ENCODE measurements at regions of chr1 and their contacts with region 1.

Region 1: DNA sequence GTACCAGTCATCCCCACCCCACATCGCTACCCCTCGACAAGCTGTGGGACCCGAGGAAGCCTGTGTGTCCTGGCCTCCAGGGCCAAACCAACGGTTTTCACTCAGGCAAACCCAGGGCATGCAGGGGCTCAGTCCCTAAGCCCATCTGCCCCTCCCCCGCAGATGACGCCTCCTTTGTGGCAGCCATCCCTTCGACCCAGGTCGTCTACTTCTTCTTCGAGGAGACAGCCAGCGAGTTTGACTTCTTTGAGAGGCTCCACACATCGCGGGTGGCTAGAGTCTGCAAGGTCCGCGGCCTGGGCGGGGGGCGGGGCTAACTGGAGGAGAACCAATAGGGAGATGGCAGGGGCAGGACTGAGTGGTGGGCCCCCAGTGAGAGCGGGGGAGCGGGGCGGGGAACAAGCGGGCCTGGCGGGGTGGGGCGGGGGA is 7.4 kb downstream of the SEMA4A start:
- DNase-seq: peak; percentile 49
- H3K4me3 Mint-ChIP-seq: peak overlapping the region; percentile 77
- H3K27ac Mint-ChIP-seq: peak overlapping the region; percentile 93
- H3K4me1 Mint-ChIP-seq: peaks cover 72% of the 10 kb centered on the region
- H3K27me3 Mint-ChIP-seq: no peaks in the 10 kb centered on the region

Region 2: DNA sequence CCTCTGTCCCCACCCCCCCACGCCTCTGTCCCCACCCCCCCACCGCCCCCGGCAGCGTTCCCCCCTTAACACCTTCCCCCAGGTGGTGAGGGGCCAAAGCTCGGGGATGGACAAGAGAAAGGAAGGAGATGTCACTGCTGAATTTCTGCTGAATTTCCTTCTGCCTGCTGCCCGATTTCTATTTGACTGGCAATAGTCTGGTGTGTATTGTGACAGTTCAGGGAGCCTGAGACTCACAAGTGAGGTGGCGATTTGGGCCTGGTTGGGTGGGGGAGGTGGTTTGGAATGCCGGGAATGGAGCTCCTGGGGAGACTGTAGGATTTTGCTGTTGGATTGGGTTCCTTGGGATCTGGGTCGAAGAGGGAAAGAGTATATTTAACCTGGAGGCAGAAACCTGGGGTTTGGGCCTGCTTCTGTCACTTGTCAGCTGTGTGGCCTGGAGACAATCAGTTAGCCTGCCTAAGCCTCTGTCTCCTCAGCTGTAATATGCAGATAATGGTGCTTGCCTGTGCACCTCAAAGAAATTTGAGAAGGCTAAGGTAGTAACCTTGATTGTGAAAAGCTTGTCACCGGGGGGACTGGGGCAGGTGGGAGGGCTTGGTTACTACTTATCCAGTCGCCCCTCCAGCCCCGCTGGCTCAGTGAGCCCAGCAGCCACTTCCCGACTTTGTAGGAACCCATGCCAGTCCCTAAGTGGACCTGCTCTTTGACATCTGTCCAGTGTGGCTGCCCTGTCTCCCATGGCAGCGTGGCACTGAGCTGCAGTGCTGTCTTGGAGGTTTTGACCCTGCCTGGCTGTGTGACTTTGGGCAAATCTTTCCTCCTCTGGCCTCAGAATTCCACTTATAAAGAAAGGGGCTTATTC is 53.9 kb before region 1 on chr1:
- intact Hi-C with region 1: loop called (anchors 1 kb)
- DNase-seq: no peak
- H3K4me3 Mint-ChIP-seq: peak overlapping the region; percentile 87
- H3K27ac Mint-ChIP-seq: peak overlapping the region; percentile 100
- H3K4me1 Mint-ChIP-seq: peaks cover 54% of the 10 kb centered on the region
- H3K27me3 Mint-ChIP-seq: no peaks in the 10 kb centered on the region

Region 3: DNA sequence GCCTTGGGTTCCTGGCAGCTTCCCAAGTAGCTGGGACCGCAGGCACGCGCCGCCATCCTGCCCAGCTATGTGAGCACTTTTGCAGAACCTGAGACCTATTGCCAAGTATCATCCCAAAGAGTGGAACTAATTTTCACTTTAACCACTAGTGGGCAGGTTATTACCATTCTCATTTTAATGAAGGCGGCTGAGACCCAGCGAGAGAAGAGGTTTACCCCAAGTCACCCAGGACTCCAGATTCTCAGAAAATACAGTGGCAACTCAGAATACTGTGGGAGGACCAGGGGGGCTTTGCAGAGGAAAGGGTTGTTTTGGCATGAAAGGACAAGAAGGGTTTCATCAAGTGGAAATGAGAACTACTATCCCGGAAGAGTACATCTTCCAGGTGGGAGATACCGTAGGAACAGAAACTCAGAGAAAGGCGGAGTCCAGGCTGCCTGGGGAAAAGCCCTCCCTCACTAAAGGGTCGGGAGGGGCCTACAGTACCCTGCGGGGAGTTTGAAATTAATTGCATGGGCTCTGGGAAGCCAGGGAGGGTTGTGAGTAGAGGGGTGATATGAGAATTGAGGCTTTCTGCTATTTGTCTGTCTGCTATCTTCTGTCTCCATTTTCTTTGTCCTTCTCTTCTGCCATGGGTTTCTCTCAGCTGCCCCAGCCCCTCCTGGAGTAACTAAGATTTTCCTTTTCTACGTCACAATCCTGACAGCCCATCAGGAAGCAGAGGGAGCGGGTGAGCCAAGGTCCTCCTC is 14.6 kb before region 1 on chr1:
- intact Hi-C with region 1: loop called (anchors 1 kb)
- DNase-seq: peak; percentile 35
- H3K4me3 Mint-ChIP-seq: peak overlapping the region; percentile 18
- H3K27ac Mint-ChIP-seq: peak overlapping the region; percentile 76
- H3K4me1 Mint-ChIP-seq: peaks cover 36% of the 10 kb centered on the region
- H3K27me3 Mint-ChIP-seq: no peaks in the 10 kb centered on the region

Region 4: GRCh38 chr1:156198831-156199349 is 38.1 kb after region 1 on chr1:
- intact Hi-C with region 1: loop called (anchors 1 kb)
- DNase-seq: no peak
- H3K4me3 Mint-ChIP-seq: peak overlapping the region; percentile 76
- H3K27ac Mint-ChIP-seq: peak overlapping the region; percentile 95
- H3K4me1 Mint-ChIP-seq: peaks cover 55% of the 10 kb centered on the region
- H3K27me3 Mint-ChIP-seq: no peaks in the 10 kb centered on the region

Region 5: GRCh38 chr1:156456622-156457465 is 296.1 kb after region 1 on chr1:
- intact Hi-C with region 1: no loop called
- DNase-seq: peak; percentile 92
- H3K4me3 Mint-ChIP-seq: peak overlapping the region; percentile 84
- H3K27ac Mint-ChIP-seq: peak overlapping the region; percentile 97
- H3K4me1 Mint-ChIP-seq: peaks cover 21% of the 10 kb centered on the region
- H3K27me3 Mint-ChIP-seq: peaks cover 13% of the 10 kb centered on the region

Measured in activated T-helper 2 cell treated with anti-CD3 and anti-CD28 coated beads, Interferon-gamma antibody, Interleukin-2, Interleukin-4, amounts not matched to agents 10 μg/mL and 5 μg/mL and 100 μg/mL, durations not matched to agents 14 hours and 24 hours and 36 hours (primary cell).